CD4-positive, alpha-beta memory T cell (primary cell): ENCODE measurements at regions of chrX and their contacts with region 1.

Region 1: GRCh38 chrX:154490414-154491083 is at the start of gene SLC10A3:
- DNase-seq: peak; percentile 83 to 92 (median 86)
- H3K4me3 ChIP-seq: peak within 1 kb of the TSS; percentile 42 to 57
- H3K4me3 Mint-ChIP-seq: peak within 1 kb of the TSS; percentile 87 to 93 (median 89)
- H3K27ac ChIP-seq: peak within 1 kb of the TSS; percentile 71
- H3K27ac Mint-ChIP-seq: peak within 1 kb of the TSS; percentile 90 to 97 (median 93)
- H3K4me1 ChIP-seq: peaks cover 28% of the 10 kb centered on the region
- H3K4me1 Mint-ChIP-seq: peaks cover 5 to 31% (median 16%) of the 10 kb centered on the region in 4 donors
- H3K27me3 ChIP-seq: no peaks in the 10 kb centered on the region
- H3K27me3 Mint-ChIP-seq: no peaks in the 10 kb centered on the region
- total RNA-seq, gene SLC10A3: 22.5 to 23.7 TPM

Region 2: DNA sequence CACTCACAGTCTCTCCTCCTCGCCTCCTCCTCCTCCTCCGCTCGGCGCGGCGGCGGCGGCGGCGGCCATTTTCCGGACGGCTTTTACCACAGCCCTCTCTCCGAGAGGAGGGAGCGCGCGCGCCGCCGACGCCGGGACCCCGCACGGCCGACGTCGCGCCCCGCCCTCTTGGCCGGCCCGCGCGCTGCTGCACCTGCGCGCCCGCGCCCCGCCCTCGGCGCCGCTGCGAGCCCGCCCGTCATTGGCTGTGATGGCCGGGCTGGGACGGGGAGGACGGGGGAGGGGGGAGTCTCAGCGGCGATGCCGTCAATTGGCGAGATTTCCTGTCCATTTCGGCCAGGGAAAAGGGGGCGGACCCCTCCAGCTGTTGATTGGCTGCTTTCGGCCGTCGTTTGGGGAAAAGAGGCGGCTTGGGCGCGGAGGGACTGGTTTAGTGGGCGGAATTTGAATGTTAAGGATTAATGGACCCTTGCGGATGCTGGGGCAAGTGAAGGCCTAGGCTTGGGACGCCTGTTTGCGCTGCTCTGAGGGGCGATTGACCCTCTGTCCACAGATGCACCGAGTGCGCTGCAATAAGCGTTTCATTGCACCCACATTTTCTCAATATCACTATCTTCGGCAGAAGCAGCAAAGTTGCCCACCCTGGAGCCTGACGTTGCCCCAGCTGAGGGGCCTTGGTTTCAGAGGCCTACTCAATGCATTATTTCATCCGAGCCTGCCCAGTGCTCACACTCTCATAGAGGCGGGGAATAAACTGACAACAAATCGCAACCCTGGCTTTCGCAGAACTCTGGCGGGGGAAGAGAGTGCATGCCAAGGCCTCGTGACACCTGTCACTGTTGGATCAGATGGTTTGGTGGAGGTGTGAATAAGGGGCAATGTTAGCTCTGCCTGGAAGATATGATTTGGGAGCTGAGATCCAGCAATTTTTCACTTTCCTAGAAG is 392.7 kb before region 1 on chrX and contains the start of gene MECP2:
- CTCF ChIA-PET with region 1: no interaction called
- POLR2A ChIA-PET with region 1: no interaction called
- intact Hi-C with region 1: loop called (anchors 10 kb)
- DNase-seq: peak; percentile 87 to 89 (median 87)
- H3K4me3 ChIP-seq: peak within 1 kb of the TSS; percentile 75 to 76
- H3K4me3 Mint-ChIP-seq: peak within 1 kb of the TSS; percentile 89 to 97 (median 96)
- H3K27ac ChIP-seq: peak within 1 kb of the TSS; percentile 96
- H3K27ac Mint-ChIP-seq: peak within 1 kb of the TSS; percentile 94 to 98 (median 97)
- H3K4me1 ChIP-seq: peaks cover 38% of the 10 kb centered on the region
- H3K4me1 Mint-ChIP-seq: peaks cover 25 to 47% (median 28%) of the 10 kb centered on the region in 4 donors
- H3K27me3 ChIP-seq: no peaks in the 10 kb centered on the region
- H3K27me3 Mint-ChIP-seq: no peaks in the 10 kb centered on the region
- total RNA-seq, gene MECP2: 103 to 108 TPM

Region 3: GRCh38 chrX:154443992-154444754 is 46.4 kb before region 1 on chrX and contains the start of gene FAM50A:
- CTCF ChIA-PET with region 1: no interaction called
- POLR2A ChIA-PET with region 1: interaction called, 9 read pairs
- intact Hi-C with region 1: loop called (anchors 5 kb)
- DNase-seq: peak; percentile 59 to 67 (median 62)
- H3K4me3 ChIP-seq: peak within 1 kb of the TSS; percentile 3 to 45
- H3K4me3 Mint-ChIP-seq: peak within 1 kb of the TSS; percentile 63 to 86 (median 77)
- H3K27ac ChIP-seq: peak within 1 kb of the TSS; percentile 69
- H3K27ac Mint-ChIP-seq: peak within 1 kb of the TSS; percentile 81 to 95 (median 89)
- H3K4me1 ChIP-seq: peaks cover 49% of the 10 kb centered on the region
- H3K4me1 Mint-ChIP-seq: peaks cover 7 to 51% (median 23%) of the 10 kb centered on the region in 4 donors
- H3K27me3 ChIP-seq: no peaks in the 10 kb centered on the region
- H3K27me3 Mint-ChIP-seq: no peaks in the 10 kb centered on the region
- total RNA-seq, gene FAM50A: 65.2 to 70.3 TPM

Region 4: DNA sequence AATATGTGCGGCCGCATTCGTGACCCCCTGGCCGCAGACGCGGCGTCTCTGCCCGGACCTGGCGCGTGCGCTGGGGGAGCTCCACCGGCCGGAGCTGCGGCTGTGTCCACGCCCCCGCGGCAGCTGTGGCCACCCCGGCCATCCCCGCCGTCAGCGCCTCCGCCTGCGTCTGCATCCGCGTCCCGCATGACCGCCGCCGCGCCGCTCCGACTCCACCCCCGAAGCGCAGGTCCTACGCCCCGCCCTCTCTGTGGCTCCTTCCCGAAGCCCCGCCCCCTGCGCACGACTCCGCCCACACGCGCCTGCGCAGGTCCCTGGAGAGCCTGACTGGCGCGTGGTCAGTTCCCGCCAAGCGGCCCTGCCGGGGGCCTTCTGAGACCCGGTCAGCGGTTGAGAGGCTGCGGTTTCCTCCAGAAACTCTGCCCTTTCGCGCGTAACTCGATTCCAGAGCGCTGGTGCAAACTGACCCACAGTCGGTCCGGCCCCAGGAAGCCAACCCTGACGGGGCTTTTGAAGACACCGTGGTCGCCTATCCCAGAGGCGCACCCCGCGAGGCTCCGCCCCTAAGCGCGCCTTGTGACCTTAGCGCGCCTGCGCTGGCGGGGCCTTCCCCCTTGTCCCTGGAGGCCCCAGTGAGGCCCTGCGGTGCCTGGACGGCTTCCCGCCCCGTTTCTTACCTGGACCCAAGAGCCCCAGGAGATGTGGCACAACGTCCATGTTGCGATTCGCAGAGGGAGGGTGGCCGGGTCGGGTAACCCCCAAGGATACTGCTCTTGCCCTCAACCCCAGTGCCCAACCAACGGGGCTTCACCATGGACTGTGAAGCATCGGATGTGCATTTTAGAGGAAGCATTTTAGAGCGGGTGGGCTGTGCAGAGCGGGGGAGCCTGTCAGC is 11.6 kb before region 1 on chrX and contains the start of gene LAGE3:
- CTCF ChIA-PET with region 1: interaction called, 4 read pairs
- POLR2A ChIA-PET with region 1: interaction called, 29 read pairs
- intact Hi-C with region 1: loop called (anchors 1 kb)
- DNase-seq: peak; percentile 89 to 96 (median 94)
- H3K4me3 ChIP-seq: peak within 1 kb of the TSS in 1 of 2 donors; percentile 55
- H3K4me3 Mint-ChIP-seq: peak within 1 kb of the TSS; percentile 78 to 87 (median 83)
- H3K27ac ChIP-seq: peak within 1 kb of the TSS; percentile 76
- H3K27ac Mint-ChIP-seq: peak within 1 kb of the TSS; percentile 87 to 97 (median 91)
- H3K4me1 ChIP-seq: peaks cover 21% of the 10 kb centered on the region
- H3K4me1 Mint-ChIP-seq: peaks cover 5 to 19% (median 10%) of the 10 kb centered on the region in 4 donors
- H3K27me3 ChIP-seq: no peaks in the 10 kb centered on the region
- H3K27me3 Mint-ChIP-seq: no peaks in the 10 kb centered on the region
- total RNA-seq, gene LAGE3: 18.5 to 19.3 TPM

Region 5: GRCh38 chrX:154526901-154527675 is 36.5 kb after region 1 on chrX:
- CTCF ChIA-PET with region 1: interaction called, 10 read pairs
- POLR2A ChIA-PET with region 1: interaction called, 14 read pairs
- intact Hi-C with region 1: no loop called
- DNase-seq: peak; percentile 43 to 65 (median 47)
- H3K4me3 ChIP-seq: no peak overlapping the region
- H3K4me3 Mint-ChIP-seq: peak overlapping the region in 5 of 8 donors; percentile 12 to 63 (median 52)
- H3K27ac ChIP-seq: peak overlapping the region; percentile 31
- H3K27ac Mint-ChIP-seq: peak overlapping the region in 6 of 7 donors; percentile 22 to 77 (median 68)
- H3K4me1 ChIP-seq: peaks cover 23% of the 10 kb centered on the region
- H3K4me1 Mint-ChIP-seq: peaks cover 11 to 23% (median 16%) of the 10 kb centered on the region in 4 donors
- H3K27me3 ChIP-seq: no peaks in the 10 kb centered on the region
- H3K27me3 Mint-ChIP-seq: no peaks in the 10 kb centered on the region

Region 6: DNA sequence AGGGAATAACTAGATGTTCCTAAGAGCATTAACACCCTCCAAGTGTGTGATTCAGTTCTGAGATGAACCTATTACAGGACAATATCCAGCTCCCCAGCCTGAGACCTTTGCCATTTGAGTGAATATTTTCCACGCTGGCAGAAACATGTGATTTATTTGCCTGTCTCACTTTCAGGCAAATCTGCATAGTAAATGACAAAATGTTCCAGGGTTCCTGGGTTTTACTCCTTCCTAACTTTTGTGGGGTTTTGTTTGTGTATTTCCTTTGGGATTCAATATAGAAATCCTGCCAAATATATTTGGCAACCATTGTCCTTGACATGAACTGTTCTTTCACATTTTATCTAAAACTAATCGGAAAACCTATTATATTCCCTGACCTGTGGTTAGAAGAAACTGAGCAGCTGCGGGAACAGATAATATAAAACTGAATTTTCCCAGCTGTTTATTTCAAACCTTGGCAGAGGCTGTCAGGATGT is 519.5 kb after region 1 on chrX:
- CTCF ChIA-PET with region 1: no interaction called
- POLR2A ChIA-PET with region 1: no interaction called
- intact Hi-C with region 1: no loop called
- DNase-seq: no peak
- H3K4me3 ChIP-seq: no peak overlapping the region
- H3K4me3 Mint-ChIP-seq: no peak overlapping the region
- H3K27ac ChIP-seq: no peak overlapping the region
- H3K27ac Mint-ChIP-seq: no peak overlapping the region
- H3K4me1 ChIP-seq: no peaks in the 10 kb centered on the region
- H3K4me1 Mint-ChIP-seq: no peaks in the 10 kb centered on the region
- H3K27me3 ChIP-seq: no peaks in the 10 kb centered on the region
- H3K27me3 Mint-ChIP-seq: peaks cover 1 to 2% of the 10 kb centered on the region in 2 donors